PC-9 (cell line): ENCODE measurements at regions of chr10 and their contacts with region 1.

Region 1: DNA sequence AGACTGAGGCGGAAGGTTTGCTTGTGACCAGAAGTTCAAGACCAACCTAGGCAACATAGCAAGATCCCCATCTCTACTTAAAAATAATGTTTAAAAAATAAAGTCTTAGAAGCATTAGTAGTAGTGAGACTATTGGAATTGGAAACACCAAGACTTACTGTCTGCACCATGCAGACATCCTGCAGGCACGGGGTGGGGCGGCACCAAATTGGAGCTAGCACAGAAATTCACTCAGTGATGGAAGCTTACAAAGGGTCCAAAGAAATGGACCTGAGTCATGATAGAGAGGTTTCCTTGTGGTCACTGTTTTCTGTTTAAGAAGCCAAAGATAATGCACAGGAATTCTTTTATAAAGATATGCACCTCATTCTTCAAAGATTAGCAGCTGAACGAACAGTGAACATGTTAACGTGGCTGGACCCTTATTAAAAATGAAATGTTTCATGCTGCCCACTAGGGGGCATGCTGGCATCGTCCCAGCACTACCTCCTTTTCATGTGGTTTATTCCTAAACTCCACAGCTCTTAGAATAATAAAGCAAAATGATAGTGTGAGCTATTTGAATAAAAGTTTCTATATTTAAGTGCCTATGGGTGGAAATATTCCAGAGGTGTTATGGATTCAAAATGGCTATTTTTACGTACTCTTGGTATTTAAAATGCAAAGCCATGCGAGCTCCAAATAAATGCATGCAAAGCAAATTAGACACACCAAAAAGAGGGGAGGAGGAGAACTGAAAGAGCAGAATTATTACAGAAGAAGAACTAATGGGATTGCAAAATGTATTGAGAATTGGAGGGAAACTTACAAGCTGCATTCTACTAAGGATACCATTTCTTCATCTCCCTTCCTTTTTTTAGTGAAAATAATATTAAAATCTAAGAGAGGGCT is 28.6 kb downstream of the PDSS1 start:
- DNase-seq: peak in 1 of 2 experiments; percentile 32
- H3K4me3 ChIP-seq: no peak overlapping the region
- H3K27ac ChIP-seq: no peak overlapping the region
- H3K4me1 ChIP-seq: no peaks in the 10 kb centered on the region
- H3K27me3 ChIP-seq: no peaks in the 10 kb centered on the region
- CTCF ChIP-seq: peak; percentile 83

Region 2: DNA sequence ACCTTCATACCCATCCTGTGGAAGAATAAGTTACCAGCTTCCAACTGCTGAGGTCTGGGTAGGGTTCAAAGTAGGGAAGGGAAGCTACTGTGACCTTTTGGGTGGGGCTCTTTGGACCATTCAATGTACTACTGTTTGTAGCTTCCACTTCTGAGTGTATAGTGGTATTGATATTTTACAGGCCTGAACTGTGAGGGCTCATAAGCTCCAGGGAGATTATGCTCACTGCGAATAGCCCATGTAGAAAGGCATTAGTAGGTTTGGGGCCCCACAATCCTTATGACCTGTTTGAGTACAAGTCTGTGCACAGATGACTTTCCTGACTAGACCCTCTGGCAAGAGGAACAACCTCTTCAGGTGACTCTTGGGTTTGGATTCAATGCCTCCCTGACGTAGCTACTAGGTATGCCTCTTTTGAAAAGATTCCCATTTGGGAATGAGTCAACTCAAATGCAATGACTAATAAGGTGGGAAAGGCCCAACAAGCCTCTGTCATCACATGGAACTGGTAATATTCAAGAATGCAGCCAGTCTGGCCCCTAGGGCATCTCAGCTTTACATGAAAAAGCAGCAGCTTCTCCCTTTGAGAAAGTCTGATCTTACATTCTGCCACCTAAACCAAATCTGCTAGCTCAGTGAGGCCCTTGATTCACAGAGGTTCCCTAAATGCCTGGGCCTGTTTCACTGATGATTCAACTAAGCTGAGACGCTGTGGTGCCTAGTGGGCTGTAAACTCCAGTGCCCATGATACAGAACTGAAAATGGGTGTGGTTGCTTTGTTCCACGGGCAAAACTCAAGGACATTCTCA is 54.9 kb after region 1 on chr10:
- CTCF ChIA-PET with region 1: interaction called, 14 read pairs
- POLR2A ChIA-PET with region 1: no interaction called
- intact Hi-C with region 1: no loop called
- DNase-seq: peak; percentile 75 to 92
- H3K4me3 ChIP-seq: no peak overlapping the region
- H3K27ac ChIP-seq: peak overlapping the region; percentile 92
- H3K4me1 ChIP-seq: peaks cover 20% of the 10 kb centered on the region
- H3K27me3 ChIP-seq: no peaks in the 10 kb centered on the region
- CTCF ChIP-seq: no peak